ENCODE measurements at regions of chr15 and their contacts with region 1.

Region 1: DNA sequence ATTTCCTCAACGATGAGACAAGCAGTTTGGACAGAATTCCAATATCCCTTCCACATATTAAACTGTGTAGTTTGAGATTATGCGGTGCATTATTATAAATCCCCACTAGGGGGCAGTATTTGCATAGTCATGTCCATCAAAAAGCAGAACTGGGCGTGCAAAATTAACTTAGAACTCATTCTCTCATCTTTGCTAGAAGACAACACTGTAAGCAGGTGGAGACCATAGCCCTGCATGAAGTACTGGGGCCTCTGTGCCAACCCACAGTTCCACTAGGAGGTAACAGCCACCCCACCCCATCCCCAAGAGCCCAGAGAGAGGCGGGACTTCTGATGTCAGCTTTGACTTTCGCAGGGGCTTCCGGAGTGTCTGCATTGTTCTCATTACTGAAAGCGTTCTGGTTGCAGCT is 106.6 kb upstream of the TMC3 start:
- DNase-seq: peak in 1 of 2 experiments; percentile 54
- H3K4me3 ChIP-seq: no peak overlapping the region
- H3K27ac ChIP-seq: no peak overlapping the region
- H3K4me1 ChIP-seq: peaks cover 0 to 3% (median 0%) of the 10 kb centered on the region in 4 experiments; a peak in 2 of 7 replicates
- H3K27me3 ChIP-seq: no peaks in the 10 kb centered on the region
- CTCF ChIP-seq: peak in 2 of 3 experiments; percentile 55 to 65; a peak in 2 of 4 replicates
- EP300 ChIP-seq: no peak
- POLR2A ChIP-seq: no peak
- RAD21 ChIP-seq: peak; percentile 85 to 89

Region 2: DNA sequence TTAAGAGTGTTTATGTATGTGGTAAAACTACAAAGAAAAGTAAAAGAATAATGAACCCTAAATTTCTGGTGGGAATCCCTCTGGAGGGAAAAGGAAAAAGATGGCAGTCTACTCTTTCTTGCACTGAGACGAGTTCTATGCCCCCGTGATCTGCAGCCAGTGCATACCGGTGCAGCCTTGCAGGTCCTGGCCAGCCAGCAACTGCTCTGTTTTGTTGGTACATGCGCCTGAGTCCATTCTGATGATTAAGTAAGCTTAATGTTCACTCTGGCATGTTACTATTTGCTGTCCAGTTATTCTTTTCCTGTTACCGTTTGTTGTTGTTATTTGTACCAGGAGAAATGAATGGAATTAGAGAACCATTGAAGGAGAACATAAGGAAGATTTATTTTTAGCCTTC is 11.5 kb before region 1 on chr15:
- CTCF ChIA-PET with region 1: interaction called, 11 read pairs
- POLR2A ChIA-PET with region 1: no interaction called
- DNase-seq: no peak
- H3K4me3 ChIP-seq: no peak overlapping the region
- H3K27ac ChIP-seq: no peak overlapping the region
- H3K4me1 ChIP-seq: no peaks in the 10 kb centered on the region
- H3K27me3 ChIP-seq: no peaks in the 10 kb centered on the region
- CTCF ChIP-seq: no peak
- EP300 ChIP-seq: no peak
- POLR2A ChIP-seq: no peak
- RAD21 ChIP-seq: no peak

Region 3: GRCh38 chr15:81492331-81492963 is 11.8 kb after region 1 on chr15:
- CTCF ChIA-PET with region 1: interaction called, 29 read pairs
- POLR2A ChIA-PET with region 1: no interaction called
- DNase-seq: no peak
- H3K4me3 ChIP-seq: no peak overlapping the region
- H3K27ac ChIP-seq: no peak overlapping the region
- H3K4me1 ChIP-seq: no peaks in the 10 kb centered on the region
- H3K27me3 ChIP-seq: no peaks in the 10 kb centered on the region
- CTCF ChIP-seq: no peak
- EP300 ChIP-seq: no peak
- POLR2A ChIP-seq: no peak
- RAD21 ChIP-seq: no peak

Region 4: DNA sequence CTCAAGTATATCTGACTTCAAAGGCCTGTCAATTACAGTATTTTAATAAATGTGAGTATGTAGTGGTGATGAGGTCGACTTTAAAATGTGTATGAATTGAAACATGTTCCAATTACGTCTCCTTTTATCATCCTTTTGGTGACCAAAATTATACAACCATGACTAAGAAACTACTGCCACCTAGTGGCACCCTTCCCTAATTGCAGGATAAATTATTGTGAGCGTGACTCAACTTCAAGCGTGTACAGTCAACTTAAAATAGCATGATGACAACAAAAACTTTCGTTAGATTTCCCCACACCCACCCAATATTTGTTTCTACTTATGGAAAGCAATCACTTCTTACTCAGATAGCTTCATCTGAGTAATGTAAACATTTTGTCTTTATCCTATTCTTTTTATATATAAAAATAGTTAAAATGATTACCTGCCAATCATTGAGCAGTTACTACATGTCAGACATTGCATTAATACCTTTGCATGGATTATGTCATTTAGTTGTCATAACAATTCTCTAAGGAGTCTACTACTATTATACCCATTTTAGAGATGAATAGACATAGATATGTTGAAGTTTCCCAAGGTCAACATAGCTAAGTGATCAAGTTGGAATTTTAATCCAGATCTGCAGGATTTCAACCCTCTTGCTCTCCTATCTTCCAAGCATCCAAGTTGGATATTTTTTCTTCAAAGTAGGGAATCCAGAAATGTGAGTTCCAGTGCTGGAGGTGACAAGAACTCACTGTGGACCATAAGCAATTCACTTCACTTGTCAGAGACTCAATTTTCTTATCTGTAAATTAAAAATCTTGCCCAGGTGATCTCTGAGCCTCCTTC is 459.2 kb after region 1 on chr15:
- CTCF ChIA-PET with region 1: interaction called, 10 read pairs
- POLR2A ChIA-PET with region 1: no interaction called
- DNase-seq: peak; percentile 15 to 53
- H3K4me3 ChIP-seq: no peak overlapping the region
- H3K27ac ChIP-seq: no peak overlapping the region
- H3K4me1 ChIP-seq: peaks cover 0 to 5% (median 1%) of the 10 kb centered on the region in 4 experiments; a peak in 2 of 7 replicates
- H3K27me3 ChIP-seq: no peaks in the 10 kb centered on the region
- CTCF ChIP-seq: peak in 2 of 3 experiments; percentile 57 to 72; a peak in 3 of 4 replicates
- EP300 ChIP-seq: no peak
- POLR2A ChIP-seq: no peak
- RAD21 ChIP-seq: peak; percentile 86 to 88